Activated naive CD4-positive, alpha-beta T cell treated with anti-CD3 and anti-CD28 coated beads for 36 hours (primary cell): ENCODE measurements at regions of chr1 and their contacts with region 1.

Region 1: GRCh38 chr1:26874896-26875295 is 11.9 kb downstream of the SFN start:
- DNase-seq: no peak
- H3K4me3 Mint-ChIP-seq: no peak overlapping the region
- H3K27ac Mint-ChIP-seq: no peak overlapping the region
- H3K4me1 Mint-ChIP-seq: peaks cover 2% of the 10 kb centered on the region
- H3K27me3 Mint-ChIP-seq: no peaks in the 10 kb centered on the region

Region 2: DNA sequence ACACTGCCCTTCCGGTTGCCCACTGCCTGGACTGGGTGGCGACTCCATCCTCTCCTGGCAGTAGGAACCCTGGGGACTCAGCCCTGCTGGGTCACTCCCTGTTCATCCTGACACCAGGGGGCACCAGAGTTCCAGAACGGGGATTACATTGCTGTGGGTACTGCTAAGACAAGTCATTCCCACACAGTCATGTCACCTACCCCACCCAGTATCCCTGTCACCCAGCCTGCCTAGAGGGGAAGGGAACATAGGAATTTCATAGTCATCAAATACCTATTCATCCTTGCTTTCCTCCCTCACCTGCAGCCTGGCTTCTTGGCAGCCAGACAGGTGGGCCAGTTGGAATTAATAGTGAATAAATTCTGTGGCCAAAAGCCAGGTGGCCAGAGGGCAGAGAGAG is 21.7 kb before region 1 on chr1:
- CTCF ChIA-PET with region 1: interaction called, 6 read pairs
- intact Hi-C with region 1: loop called (anchors 1 kb)
- DNase-seq: peak; percentile 88
- H3K4me3 Mint-ChIP-seq: no peak overlapping the region
- H3K27ac Mint-ChIP-seq: no peak overlapping the region
- H3K4me1 Mint-ChIP-seq: no peaks in the 10 kb centered on the region
- H3K27me3 Mint-ChIP-seq: no peaks in the 10 kb centered on the region

Region 3: GRCh38 chr1:26889551-26890466 is 14.9 kb after region 1 on chr1 and contains the start of gene GPN2:
- CTCF ChIA-PET with region 1: interaction called, 14 read pairs
- intact Hi-C with region 1: no loop called
- DNase-seq: peak; percentile 82
- H3K4me3 Mint-ChIP-seq: peak within 1 kb of the TSS; percentile 94
- H3K27ac Mint-ChIP-seq: peak within 1 kb of the TSS; percentile 91
- H3K4me1 Mint-ChIP-seq: peaks cover 30% of the 10 kb centered on the region
- H3K27me3 Mint-ChIP-seq: no peaks in the 10 kb centered on the region
- total RNA-seq, gene GPN2: 19.8 to 20.7 TPM